ENCODE measurements at regions of chr2 and their contacts with region 1.

Region 1: DNA sequence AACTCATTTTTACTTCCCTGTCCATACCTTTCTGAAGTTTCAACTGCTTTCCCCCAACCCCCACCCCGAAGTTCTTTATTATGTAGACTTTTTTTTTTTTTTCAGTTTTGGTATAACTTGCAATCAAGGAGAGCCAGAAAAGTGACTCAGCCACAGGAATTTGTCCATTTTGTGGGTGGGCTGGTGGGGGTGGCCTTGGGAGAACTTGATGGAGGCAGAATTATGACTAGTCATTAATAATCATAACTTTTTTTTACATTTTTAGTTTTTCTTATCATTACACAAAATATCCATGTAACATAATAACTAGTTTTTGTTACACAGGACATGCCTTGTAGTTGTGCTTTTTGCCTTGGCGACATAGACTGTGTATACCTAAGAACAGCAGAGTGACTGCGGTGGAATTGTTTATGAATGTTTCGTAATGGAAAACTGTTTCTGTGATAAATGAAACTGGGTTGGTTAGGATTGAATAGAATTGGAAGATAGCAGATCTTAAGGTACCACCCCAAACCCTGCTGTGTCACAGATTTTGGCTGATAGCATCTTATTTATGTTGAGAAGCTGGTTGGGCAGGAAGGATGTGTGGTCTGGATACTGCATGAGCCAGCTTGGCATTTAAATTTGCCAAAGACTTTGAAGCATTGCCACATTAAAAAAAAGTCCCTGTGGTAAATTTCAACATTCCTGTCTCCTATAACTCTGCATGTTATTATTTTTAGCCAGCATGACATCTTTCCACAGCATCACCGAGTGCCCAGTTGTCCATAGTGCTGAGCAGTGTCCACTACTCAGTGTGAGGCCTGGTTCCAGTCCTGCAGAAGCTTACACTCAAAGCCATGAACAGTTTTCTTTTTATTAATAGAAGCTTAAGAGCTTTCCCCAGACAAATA is 30.7 kb downstream of the LYPD6B start:
- DNase-seq: no peak
- H3K4me3 Mint-ChIP-seq: peak overlapping the region; percentile 1
- H3K27ac Mint-ChIP-seq: peak overlapping the region; percentile 74
- H3K4me1 Mint-ChIP-seq: peaks cover 19% of the 10 kb centered on the region
- H3K27me3 Mint-ChIP-seq: peaks cover 14% of the 10 kb centered on the region

Region 2: GRCh38 chr2:149000158-149000938 is 68.9 kb before region 1 on chr2:
- intact Hi-C with region 1: loop called (anchors 1 kb)
- DNase-seq: no peak
- H3K4me3 Mint-ChIP-seq: no peak overlapping the region
- H3K27ac Mint-ChIP-seq: peak overlapping the region; percentile 27
- H3K4me1 Mint-ChIP-seq: peaks cover 17% of the 10 kb centered on the region
- H3K27me3 Mint-ChIP-seq: no peaks in the 10 kb centered on the region

Region 3: GRCh38 chr2:149537092-149537726 is 468.0 kb after region 1 on chr2:
- intact Hi-C with region 1: loop called (anchors 1 kb)
- DNase-seq: no peak
- H3K4me3 Mint-ChIP-seq: no peak overlapping the region
- H3K27ac Mint-ChIP-seq: no peak overlapping the region
- H3K4me1 Mint-ChIP-seq: peaks cover 13% of the 10 kb centered on the region
- H3K27me3 Mint-ChIP-seq: peaks cover 6% of the 10 kb centered on the region

Measured in activated T-helper 1 cell treated with anti-CD3 and anti-CD28 coated beads, Interleukin-12 subunit alpha, Interleukin-12 subunit beta, Interleukin-2, Interleukin-4 antibody, amounts not matched to agents 30 ng/mL and 10 ng/mL and 1 ng/mL, durations not matched to agents 14 hours and 24 hours and 36 hours (primary cell).